GM12878 (cell line): ENCODE measurements at regions of chr4 and their contacts with region 1.

Region 1: GRCh38 chr4:15027921-15028435 is 25.7 kb downstream of the CPEB2 start:
- DNase-seq: no peak
- ATAC-seq: no peak
- H3K4me3 ChIP-seq: no peak overlapping the region
- H3K27ac ChIP-seq: no peak overlapping the region
- H3K4me1 ChIP-seq: no peaks in the 10 kb centered on the region
- H3K27me3 ChIP-seq: no peaks in the 10 kb centered on the region
- CTCF ChIP-seq: no peak
- EP300 ChIP-seq: no peak
- POLR2A ChIP-seq: no peak
- RAD21 ChIP-seq: no peak

Region 2: GRCh38 chr4:15040916-15041463 is 13.0 kb after region 1 on chr4:
- CTCF ChIA-PET with region 1: interaction called, 3 read pairs
- POLR2A ChIA-PET with region 1: interaction called, 6 read pairs
- RAD21 ChIA-PET with region 1: interaction called, 6 read pairs
- SMC1A ChIA-PET with region 1: interaction called, 14 read pairs
- in situ Hi-C with region 1: no loop called
- intact Hi-C with region 1: no loop called
- DNase-seq: no peak
- ATAC-seq: no peak
- H3K4me3 ChIP-seq: no peak overlapping the region
- H3K27ac ChIP-seq: no peak overlapping the region
- H3K4me1 ChIP-seq: no peaks in the 10 kb centered on the region
- H3K27me3 ChIP-seq: no peaks in the 10 kb centered on the region
- CTCF ChIP-seq: no peak
- EP300 ChIP-seq: no peak
- POLR2A ChIP-seq: no peak
- RAD21 ChIP-seq: no peak